Left cardiac atrium (tissue), 4 donors: ENCODE measurements at regions of chr7 and their contacts with region 1.

Region 1: GRCh38 chr7:131556052-131556908 is at the start of gene PODXL:
- DNase-seq: peak; percentile 84
- ATAC-seq: peak; percentile 86 to 91
- total RNA-seq, gene PODXL: 45.0 to 90.7 TPM

Region 2: GRCh38 chr7:131513245-131514061 is 42.8 kb before region 1 on chr7:
- intact Hi-C with region 1: loop called in 1 of 2 experiments (anchors 5 kb)
- DNase-seq: peak; percentile 84
- ATAC-seq: peak; percentile 94 to 95

Region 3: DNA sequence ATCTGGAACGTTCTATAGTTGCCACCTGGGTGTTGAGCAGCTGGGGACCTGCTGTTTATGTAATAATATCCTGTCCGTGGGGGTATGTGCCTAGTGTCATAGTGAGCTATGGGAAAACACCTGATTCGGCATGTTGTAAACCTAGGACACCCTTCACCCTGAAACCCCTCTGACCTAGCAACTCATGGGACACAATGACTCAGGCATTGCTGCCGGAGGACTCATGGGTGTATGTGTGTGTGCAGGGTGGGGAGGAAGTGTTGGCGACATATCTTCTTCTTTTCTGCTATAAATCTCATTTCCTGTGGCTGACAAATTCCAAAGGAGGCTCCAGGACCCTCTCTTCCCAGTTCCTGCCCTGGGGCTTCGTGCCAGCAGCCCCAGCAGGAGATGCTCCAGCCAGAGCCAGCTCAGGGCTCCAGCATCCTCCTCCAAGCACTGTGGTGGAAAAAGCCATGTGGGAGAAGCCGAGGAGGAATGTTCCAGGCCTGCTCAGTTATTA is 77.1 kb after region 1 on chr7:
- intact Hi-C with region 1: loop called in 1 of 2 experiments (anchors 10 kb)
- DNase-seq: peak; percentile 58
- ATAC-seq: peak; percentile 35 to 36

Region 4: GRCh38 chr7:132249614-132249972 is 693.3 kb after region 1 on chr7:
- intact Hi-C with region 1: no loop called
- DNase-seq: no peak
- ATAC-seq: peak; percentile 35 to 48